H1 (cell line): ENCODE measurements at regions of chr2 and their contacts with region 1.

Region 1: GRCh38 chr2:72973566-72974435 is 56.5 kb downstream of the EMX1 start:
- DNase-seq: peak in 1 of 2 experiments; percentile 85
- H3K4me3 ChIP-seq: no peak overlapping the region
- H3K27ac ChIP-seq: no peak overlapping the region
- H3K4me1 ChIP-seq: peaks cover 5 to 21% (median 17%) of the 10 kb centered on the region in 4 experiments
- H3K27me3 ChIP-seq: no peaks in the 10 kb centered on the region; a peak in 1 of 7 replicates
- CTCF ChIP-seq: peak; percentile 93 to 95 (median 94)
- EP300 ChIP-seq: no peak
- POLR2A ChIP-seq: no peak
- RAD21 ChIP-seq: peak; percentile 86 to 89

Region 2: DNA sequence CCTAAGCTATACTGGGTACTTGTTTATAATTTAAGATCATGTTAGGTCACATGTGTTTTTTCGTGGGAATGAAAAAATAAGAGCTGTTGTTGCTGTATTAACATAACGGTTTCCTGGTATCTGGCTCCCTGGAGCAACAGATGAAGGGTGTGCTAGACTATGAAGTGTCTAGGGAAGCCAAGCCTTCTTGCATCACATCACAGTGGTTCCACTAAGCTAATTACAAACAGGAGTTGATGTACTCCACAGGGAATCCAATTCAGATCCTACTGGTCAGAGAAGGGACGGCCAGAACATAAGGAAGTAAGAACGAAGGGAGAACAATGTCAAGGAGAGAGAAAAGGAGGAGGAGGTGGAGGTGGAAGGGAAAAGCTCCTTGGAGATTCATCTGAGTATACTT is 633.1 kb before region 1 on chr2:
- CTCF ChIA-PET with region 1: no interaction called
- POLR2A ChIA-PET with region 1: no interaction called
- DNase-seq: no peak
- H3K4me3 ChIP-seq: no peak overlapping the region
- H3K27ac ChIP-seq: no peak overlapping the region
- H3K4me1 ChIP-seq: no peaks in the 10 kb centered on the region
- H3K27me3 ChIP-seq: no peaks in the 10 kb centered on the region
- CTCF ChIP-seq: no peak
- EP300 ChIP-seq: no peak
- POLR2A ChIP-seq: no peak
- RAD21 ChIP-seq: no peak

Region 3: DNA sequence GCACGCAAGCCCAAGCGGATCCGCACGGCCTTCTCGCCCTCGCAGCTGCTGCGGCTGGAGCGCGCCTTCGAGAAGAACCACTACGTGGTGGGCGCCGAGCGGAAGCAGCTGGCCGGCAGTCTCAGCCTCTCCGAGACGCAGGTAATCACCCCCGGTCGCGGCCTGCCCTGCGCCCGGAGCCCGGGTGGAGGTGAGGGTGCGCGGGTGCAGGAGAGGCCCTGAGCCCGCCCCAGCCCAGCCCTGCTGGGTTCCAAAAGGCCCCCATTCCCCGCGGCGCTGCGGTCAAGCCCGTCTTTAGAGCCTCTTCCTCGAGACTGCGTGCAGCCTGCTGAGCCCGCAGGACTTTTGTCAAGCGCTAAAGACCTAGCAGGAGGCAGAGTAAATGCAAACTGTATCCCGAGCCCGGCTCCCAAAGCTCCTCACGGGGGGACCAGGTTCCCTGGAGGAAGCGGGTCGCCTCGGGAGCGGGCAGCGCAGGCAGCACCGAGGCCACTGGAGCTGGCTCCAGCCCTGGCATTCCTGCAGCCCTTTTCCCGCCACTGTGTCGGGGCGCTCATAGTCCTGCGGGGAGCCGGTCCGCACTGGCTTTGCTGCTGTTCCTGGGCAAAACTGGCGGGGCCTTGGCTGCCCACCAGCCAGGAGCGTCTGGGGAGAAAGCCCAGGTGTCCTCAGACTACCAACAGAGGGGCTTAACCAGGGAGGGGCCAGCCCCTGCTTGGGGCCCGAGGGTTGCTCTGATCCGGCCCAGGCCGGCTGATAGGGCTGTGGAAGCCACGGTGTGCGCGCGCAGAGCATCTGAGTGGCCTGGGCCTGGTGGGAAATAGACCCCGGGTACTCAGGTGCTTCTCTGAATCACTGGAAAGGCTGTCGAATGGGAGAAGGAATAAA is 49.2 kb before region 1 on chr2:
- CTCF ChIA-PET with region 1: interaction called, 38 read pairs
- POLR2A ChIA-PET with region 1: interaction called, 3 read pairs
- DNase-seq: peak in 1 of 2 experiments; percentile 81
- H3K4me3 ChIP-seq: peak overlapping the region in 3 of 4 experiments; percentile 19 to 54 (median 21); a peak in 6 of 8 replicates
- H3K27ac ChIP-seq: no peak overlapping the region
- H3K4me1 ChIP-seq: peaks cover 6 to 37% (median 18%) of the 10 kb centered on the region in 4 experiments
- H3K27me3 ChIP-seq: peaks cover 89 to 100% (median 97%) of the 10 kb centered on the region in 4 experiments
- CTCF ChIP-seq: no peak
- EP300 ChIP-seq: no peak
- POLR2A ChIP-seq: no peak
- RAD21 ChIP-seq: no peak; a peak in 1 of 4 replicates

Region 4: GRCh38 chr2:72940786-72941185 is 33.0 kb before region 1 on chr2:
- CTCF ChIA-PET with region 1: interaction called, 82 read pairs
- POLR2A ChIA-PET with region 1: interaction called, 4 read pairs
- DNase-seq: no peak
- H3K4me3 ChIP-seq: no peak overlapping the region
- H3K27ac ChIP-seq: no peak overlapping the region
- H3K4me1 ChIP-seq: peaks cover 0 to 22% (median 15%) of the 10 kb centered on the region in 4 experiments; a peak in 6 of 7 replicates
- H3K27me3 ChIP-seq: peaks cover 0 to under 1% (median 0%) of the 10 kb centered on the region in 4 experiments; a peak in 2 of 7 replicates
- CTCF ChIP-seq: no peak
- EP300 ChIP-seq: no peak
- POLR2A ChIP-seq: no peak
- RAD21 ChIP-seq: no peak

Region 5: DNA sequence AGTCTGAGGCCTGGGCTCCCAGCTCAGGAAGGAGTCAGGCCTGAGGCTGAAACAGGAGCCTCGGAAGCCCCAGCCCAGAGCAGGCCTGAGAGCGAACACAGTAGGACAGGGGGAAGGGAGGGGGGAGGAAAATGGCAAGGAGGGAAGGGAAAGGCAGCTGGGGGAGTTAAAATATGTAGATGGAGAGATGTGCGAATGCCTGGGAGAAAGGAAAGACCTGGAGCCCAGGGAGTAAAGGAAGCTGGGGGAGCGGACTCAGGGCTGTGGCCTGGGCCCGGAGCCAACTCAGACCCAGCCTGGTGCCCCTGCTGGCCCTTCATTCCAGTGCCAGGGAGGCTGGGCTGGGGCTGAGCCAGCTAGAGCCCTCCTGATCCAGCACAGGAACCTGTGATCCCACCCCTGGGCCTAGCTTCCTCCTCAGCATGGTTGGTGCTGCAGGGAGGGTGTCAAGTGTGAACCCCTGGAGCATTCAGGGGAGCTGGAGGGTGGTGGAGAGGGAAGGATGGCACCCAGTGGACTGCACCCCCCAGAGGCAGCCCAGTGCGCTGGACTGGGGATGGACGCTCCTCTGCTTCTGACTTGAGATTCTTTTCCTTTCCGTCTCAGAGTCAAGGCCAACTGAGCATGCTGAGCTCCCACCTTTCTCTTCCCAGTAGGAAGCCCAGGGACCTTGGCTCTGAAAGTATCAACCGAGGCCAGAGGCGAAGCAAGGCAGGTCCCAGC is 10.2 kb before region 1 on chr2:
- CTCF ChIA-PET with region 1: interaction called, 51 read pairs
- POLR2A ChIA-PET with region 1: no interaction called
- DNase-seq: peak; percentile 61 to 76
- H3K4me3 ChIP-seq: 0 out of 8 replicates have a peak overlapping the region, but pooled peaks of 1 of the 4 experiments have one; percentile 2
- H3K27ac ChIP-seq: peak overlapping the region; percentile 49; the same call in 1 of the 2 replicates
- H3K4me1 ChIP-seq: peaks cover 12 to 26% (median 22%) of the 10 kb centered on the region in 4 experiments
- H3K27me3 ChIP-seq: peaks cover 0 to 5% (median 0%) of the 10 kb centered on the region in 4 experiments; a peak in 1 of 7 replicates
- CTCF ChIP-seq: no peak
- EP300 ChIP-seq: peak in 1 of 2 experiments; percentile 69; a peak in 1 of 3 replicates
- POLR2A ChIP-seq: no peak
- RAD21 ChIP-seq: peak; percentile 17 to 30; a peak in 3 of 4 replicates

Region 6: DNA sequence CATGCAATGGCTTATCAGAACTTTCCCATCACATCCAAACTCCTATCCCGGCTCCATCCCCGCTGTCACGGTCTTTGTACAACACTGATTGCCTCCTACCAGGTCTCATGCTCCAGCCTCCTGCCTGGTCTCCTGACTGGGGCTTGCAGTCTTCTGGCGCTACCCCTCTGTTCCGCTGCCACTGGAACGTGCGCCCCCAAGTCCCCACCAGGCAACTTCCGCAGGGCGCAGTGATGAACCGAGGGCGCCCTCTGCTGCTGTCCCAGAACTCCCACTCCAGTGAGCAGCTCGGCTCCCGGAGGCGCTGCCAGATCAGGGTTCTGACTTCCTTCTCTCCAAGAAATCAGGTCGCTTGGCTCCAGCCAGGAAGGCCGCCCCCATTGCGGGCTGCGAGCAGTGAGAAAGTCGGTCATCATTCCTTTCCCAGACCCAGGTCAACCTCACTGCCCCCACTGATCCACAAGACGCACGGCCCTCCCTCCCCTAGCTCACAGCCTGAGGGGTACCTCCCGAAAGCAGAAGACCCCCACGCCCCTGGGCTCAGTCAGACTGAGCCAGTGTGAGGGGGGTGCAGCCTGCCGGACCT is 182.8 kb after region 1 on chr2:
- CTCF ChIA-PET with region 1: interaction called, 10 read pairs
- POLR2A ChIA-PET with region 1: no interaction called
- DNase-seq: peak; percentile 77 to 89
- H3K4me3 ChIP-seq: peak overlapping the region; percentile 20 to 54 (median 38); a peak in 6 of 8 replicates
- H3K27ac ChIP-seq: no peak overlapping the region
- H3K4me1 ChIP-seq: peaks cover 0 to 3% (median 0%) of the 10 kb centered on the region in 4 experiments; a peak in 2 of 7 replicates
- H3K27me3 ChIP-seq: peaks cover 0 to 7% (median 2%) of the 10 kb centered on the region in 4 experiments; a peak in 4 of 7 replicates
- CTCF ChIP-seq: peak; percentile 95 to 99 (median 95)
- EP300 ChIP-seq: peak in 1 of 2 experiments; percentile 31; a peak in 1 of 3 replicates
- POLR2A ChIP-seq: no peak
- RAD21 ChIP-seq: peak; percentile 95 to 98